CD8-positive, alpha-beta T cell (primary cell): ENCODE measurements at regions of chr2 and their contacts with region 1.

Region 1: GRCh38 chr2:68837164-68837860 is 33.9 kb downstream of the BMP10 start:
- DNase-seq: peak; percentile 39 to 83 (median 73)
- ATAC-seq: peak; percentile 74
- H3K4me3 ChIP-seq: no peak overlapping the region
- H3K4me3 Mint-ChIP-seq: no peak overlapping the region
- H3K27ac ChIP-seq: no peak overlapping the region
- H3K27ac Mint-ChIP-seq: no peak overlapping the region
- H3K4me1 ChIP-seq: peaks cover 8% of the 10 kb centered on the region
- H3K4me1 Mint-ChIP-seq: peaks cover 23% of the 10 kb centered on the region
- H3K27me3 ChIP-seq: no peaks in the 10 kb centered on the region
- H3K27me3 Mint-ChIP-seq: no peaks in the 10 kb centered on the region
- CTCF ChIP-seq: peak; percentile 82

Region 2: DNA sequence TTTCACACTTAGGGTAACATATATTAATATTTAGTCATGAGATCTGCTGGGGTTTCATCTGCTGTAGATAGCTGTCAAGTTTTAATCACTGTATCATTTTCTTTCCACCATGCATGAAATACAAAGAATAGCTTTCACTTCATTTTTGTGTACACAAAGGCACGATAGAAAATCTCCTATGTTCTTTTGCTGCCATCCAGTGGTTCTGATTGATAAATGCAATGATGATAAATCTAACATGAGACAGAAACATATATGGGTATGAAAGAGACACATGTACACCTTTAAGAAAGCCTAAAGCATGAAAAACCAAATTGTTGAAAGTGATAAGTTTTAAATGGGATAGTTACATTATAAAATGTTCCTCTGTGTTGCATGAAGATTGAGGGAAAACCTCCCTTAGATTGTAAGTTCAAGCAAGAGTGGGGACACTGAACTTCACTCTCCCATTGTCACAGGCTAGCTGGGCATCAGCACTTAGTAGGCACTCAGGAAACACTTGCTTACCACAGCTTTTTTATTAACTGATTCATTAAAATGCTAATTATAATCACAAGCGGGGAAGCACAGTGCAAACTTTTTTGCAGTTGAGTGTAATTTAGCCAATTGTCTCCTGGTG is 805.7 kb before region 1 on chr2:
- CTCF ChIA-PET with region 1: no interaction called
- POLR2A ChIA-PET with region 1: no interaction called
- intact Hi-C with region 1: no loop called
- DNase-seq: peak in 2 of 9 experiments; percentile 40 to 57
- ATAC-seq: no peak
- H3K4me3 ChIP-seq: no peak overlapping the region
- H3K4me3 Mint-ChIP-seq: no peak overlapping the region
- H3K27ac ChIP-seq: no peak overlapping the region
- H3K27ac Mint-ChIP-seq: no peak overlapping the region
- H3K4me1 ChIP-seq: no peaks in the 10 kb centered on the region
- H3K4me1 Mint-ChIP-seq: no peaks in the 10 kb centered on the region
- H3K27me3 ChIP-seq: no peaks in the 10 kb centered on the region
- H3K27me3 Mint-ChIP-seq: peaks cover 3% of the 10 kb centered on the region
- CTCF ChIP-seq: peak; percentile 58

Region 3: DNA sequence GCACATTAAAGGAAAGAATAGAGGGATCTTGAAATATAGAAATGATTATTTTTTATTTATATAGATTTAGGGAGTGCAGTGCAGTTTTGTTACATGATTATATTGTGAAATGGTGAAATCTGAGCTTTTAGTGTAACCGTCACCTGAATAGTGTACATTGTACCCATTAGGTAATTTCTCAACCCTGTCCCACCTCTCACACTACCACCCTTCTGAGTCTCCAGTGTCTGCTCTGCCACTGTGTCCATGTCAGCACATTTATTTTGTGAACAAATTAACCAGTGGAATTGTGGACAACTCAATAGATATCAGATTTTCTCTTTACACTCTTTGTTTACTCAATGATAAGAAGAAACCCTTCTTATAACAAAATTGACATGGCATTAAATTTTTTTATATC is 345.7 kb before region 1 on chr2:
- CTCF ChIA-PET with region 1: no interaction called
- POLR2A ChIA-PET with region 1: no interaction called
- intact Hi-C with region 1: no loop called
- DNase-seq: no peak
- ATAC-seq: no peak
- H3K4me3 ChIP-seq: no peak overlapping the region
- H3K4me3 Mint-ChIP-seq: no peak overlapping the region
- H3K27ac ChIP-seq: no peak overlapping the region
- H3K27ac Mint-ChIP-seq: no peak overlapping the region
- H3K4me1 ChIP-seq: no peaks in the 10 kb centered on the region
- H3K4me1 Mint-ChIP-seq: peaks cover 3% of the 10 kb centered on the region
- H3K27me3 ChIP-seq: no peaks in the 10 kb centered on the region
- H3K27me3 Mint-ChIP-seq: no peaks in the 10 kb centered on the region
- CTCF ChIP-seq: no peak

Region 4: GRCh38 chr2:68742626-68743415 is 94.5 kb before region 1 on chr2:
- CTCF ChIA-PET with region 1: interaction called, 11 read pairs
- POLR2A ChIA-PET with region 1: no interaction called
- intact Hi-C with region 1: loop called in 1 of 2 experiments (anchors 5 kb)
- DNase-seq: peak in 3 of 9 experiments; percentile 3 to 35 (median 11)
- ATAC-seq: no peak
- H3K4me3 ChIP-seq: no peak overlapping the region
- H3K4me3 Mint-ChIP-seq: peak overlapping the region; percentile 17
- H3K27ac ChIP-seq: peak overlapping the region in 1 of 2 experiments; percentile 18
- H3K27ac Mint-ChIP-seq: peak overlapping the region; percentile 42
- H3K4me1 ChIP-seq: peaks cover 82% of the 10 kb centered on the region
- H3K4me1 Mint-ChIP-seq: peaks cover 90% of the 10 kb centered on the region
- H3K27me3 ChIP-seq: no peaks in the 10 kb centered on the region
- H3K27me3 Mint-ChIP-seq: no peaks in the 10 kb centered on the region
- CTCF ChIP-seq: no peak

Region 5: DNA sequence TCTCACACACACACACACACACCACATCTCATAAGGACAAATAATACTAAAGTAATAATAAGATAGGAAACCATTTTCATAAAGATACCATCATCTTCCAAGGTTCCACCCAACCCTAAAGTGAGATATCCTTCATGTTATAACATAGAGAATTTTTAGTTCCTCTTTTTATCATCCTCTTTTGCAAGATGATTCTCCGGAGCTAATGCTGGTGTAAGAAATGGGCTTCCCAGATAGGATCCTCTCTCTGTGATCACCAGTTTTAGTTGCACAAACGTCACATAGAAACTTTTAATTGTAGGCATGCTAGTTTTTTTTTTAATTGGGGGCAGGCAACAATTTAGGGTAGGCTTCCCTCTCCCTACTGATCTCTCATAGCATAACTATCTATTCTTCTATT is 53.1 kb before region 1 on chr2:
- CTCF ChIA-PET with region 1: interaction called, 10 read pairs
- POLR2A ChIA-PET with region 1: no interaction called
- intact Hi-C with region 1: no loop called
- DNase-seq: no peak
- ATAC-seq: no peak
- H3K4me3 ChIP-seq: no peak overlapping the region
- H3K4me3 Mint-ChIP-seq: peak overlapping the region; percentile 3
- H3K27ac ChIP-seq: peak overlapping the region in 1 of 2 experiments; percentile 61
- H3K27ac Mint-ChIP-seq: peak overlapping the region; percentile 56
- H3K4me1 ChIP-seq: peaks cover 60% of the 10 kb centered on the region
- H3K4me1 Mint-ChIP-seq: peaks cover 34% of the 10 kb centered on the region
- H3K27me3 ChIP-seq: no peaks in the 10 kb centered on the region
- H3K27me3 Mint-ChIP-seq: no peaks in the 10 kb centered on the region
- CTCF ChIP-seq: no peak

Region 6: GRCh38 chr2:68849579-68850030 is 12.3 kb after region 1 on chr2:
- CTCF ChIA-PET with region 1: interaction called, 35 read pairs
- POLR2A ChIA-PET with region 1: no interaction called
- intact Hi-C with region 1: no loop called
- DNase-seq: no peak
- ATAC-seq: no peak
- H3K4me3 ChIP-seq: no peak overlapping the region
- H3K4me3 Mint-ChIP-seq: no peak overlapping the region
- H3K27ac ChIP-seq: no peak overlapping the region
- H3K27ac Mint-ChIP-seq: no peak overlapping the region
- H3K4me1 ChIP-seq: no peaks in the 10 kb centered on the region
- H3K4me1 Mint-ChIP-seq: no peaks in the 10 kb centered on the region
- H3K27me3 ChIP-seq: no peaks in the 10 kb centered on the region
- H3K27me3 Mint-ChIP-seq: peaks cover 8% of the 10 kb centered on the region
- CTCF ChIP-seq: no peak